Left ventricle myocardium superior (tissue), 1 donor: ENCODE measurements at regions of chr1 and their contacts with region 1.

Region 1: DNA sequence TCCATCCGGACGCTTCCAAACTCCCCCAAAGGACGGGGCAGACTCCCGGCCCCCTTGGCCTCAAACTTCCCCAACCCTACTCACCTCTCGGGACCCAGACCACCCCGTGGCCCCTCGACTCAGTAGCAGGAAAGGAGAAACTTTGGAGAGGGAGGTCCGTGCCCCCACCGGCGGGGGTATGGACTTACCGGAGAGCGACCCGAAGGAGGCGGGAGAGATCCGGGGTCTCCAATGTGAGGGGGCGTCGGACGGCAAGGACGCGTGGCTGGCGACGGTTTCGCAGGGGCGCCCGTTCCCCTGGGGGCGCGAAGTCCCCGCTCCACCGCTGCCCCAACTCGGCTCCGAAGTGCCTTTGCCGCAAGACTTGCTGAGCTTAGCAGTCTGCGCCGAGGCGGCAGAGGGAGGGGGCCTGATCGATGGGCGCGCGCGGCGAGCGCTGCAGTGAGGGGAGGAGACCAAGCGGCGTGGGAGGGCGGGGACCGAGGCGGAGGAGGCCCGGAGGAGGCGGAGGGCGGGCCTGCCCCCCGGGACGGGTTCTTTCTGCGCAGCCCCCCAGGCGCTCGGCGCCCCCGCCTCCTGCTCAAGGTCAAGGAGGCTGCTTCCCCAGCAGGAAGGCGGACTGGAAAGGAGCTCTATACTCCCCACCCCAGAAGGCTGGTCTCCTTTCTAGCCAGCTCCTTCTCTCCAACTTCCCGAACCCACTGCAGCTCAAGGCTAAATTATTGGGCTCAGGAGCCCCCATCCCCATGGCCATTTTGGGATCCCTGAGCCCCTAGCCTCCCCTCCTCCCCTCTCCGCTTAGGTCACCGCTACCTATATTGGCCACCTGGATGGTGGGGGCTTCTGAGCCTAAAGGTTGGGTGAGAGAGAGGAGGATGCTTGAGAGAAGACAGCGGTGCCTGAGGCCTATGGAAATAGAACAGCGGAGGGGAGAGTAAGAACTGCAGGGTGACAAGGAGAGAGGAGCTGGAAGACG is at the start of gene SYT2:
- DNase-seq: peak; percentile 39
- ATAC-seq: peak; percentile 68
- total RNA-seq, gene SYT2: not detected

Region 2: DNA sequence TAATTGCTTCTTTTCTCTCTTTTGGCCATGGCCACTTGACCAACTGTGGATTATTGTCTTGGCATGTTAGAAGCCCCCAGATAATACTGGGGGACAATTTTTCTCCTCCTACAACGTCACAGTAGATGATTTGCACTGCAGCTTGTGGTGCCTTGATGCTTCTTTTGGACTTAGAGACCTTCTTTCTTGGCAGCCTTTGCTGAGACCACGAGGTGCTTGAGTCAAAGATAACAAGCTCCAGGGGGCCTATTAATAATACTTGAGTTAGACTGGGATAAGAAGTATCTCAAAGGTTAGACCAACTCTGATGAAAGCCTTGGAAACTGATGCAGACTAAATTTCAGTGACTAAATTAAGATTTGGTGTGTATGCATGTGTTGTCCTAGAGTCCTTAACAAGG is 358.6 kb before region 1 on chr1:
- intact Hi-C with region 1: loop called (anchors 10 kb)
- DNase-seq: no peak
- ATAC-seq: no peak